AG04449 (cell line): ENCODE measurements at regions of chr21 and their contacts with region 1.

Region 1: DNA sequence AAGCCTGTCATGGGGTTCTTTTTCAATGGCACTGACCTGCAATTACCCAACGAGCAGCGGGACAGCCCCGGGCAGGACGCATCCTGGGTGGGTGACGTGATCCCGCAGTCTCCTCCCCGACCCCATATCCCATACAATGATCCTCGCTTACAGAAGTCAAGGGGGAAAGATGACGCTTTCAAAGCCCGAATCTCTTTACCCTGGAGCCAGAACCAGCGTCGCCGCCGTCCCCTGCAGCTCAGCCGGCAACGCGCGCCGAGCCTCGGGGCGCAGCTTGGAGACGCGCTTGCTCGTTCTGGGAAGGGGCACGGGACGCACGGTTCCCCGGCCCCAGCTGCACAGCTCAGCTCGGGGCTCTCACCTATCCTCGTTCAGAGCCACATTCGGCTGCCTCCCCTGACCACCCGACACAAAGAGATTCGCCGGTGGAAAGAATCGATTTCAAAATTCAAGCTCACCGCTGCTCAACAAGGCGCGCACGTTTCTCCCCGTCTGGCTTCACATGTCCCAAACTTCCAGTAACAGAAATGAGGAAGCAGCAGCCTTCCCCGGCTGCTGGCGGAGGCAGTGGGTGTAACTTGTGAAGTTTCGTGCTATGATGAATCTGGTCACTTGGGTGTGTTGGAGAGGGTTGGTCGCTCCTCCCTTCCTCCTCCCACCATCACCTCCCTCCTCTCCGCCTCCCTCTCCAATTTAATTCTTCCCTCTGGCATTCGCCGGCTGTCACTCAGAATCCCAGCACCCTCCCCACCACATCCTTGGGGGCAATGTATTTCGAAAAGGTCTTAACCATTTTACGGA is at the start of gene TIAM1:
- DNase-seq: peak; percentile 23
- H3K4me3 ChIP-seq: peak within 1 kb of the TSS; percentile 75
- CTCF ChIP-seq: no peak

Region 2: GRCh38 chr21:31198575-31198974 is 145.3 kb before region 1 on chr21:
- CTCF ChIA-PET with region 1: interaction called, 13 read pairs
- POLR2A ChIA-PET with region 1: no interaction called
- DNase-seq: peak; percentile 10
- H3K4me3 ChIP-seq: no peak overlapping the region
- CTCF ChIP-seq: peak; percentile 25

Region 3: GRCh38 chr21:31316488-31317169 is 27.3 kb before region 1 on chr21:
- CTCF ChIA-PET with region 1: interaction called, 13 read pairs
- POLR2A ChIA-PET with region 1: no interaction called
- DNase-seq: no peak
- H3K4me3 ChIP-seq: no peak overlapping the region
- CTCF ChIP-seq: no peak

Region 4: DNA sequence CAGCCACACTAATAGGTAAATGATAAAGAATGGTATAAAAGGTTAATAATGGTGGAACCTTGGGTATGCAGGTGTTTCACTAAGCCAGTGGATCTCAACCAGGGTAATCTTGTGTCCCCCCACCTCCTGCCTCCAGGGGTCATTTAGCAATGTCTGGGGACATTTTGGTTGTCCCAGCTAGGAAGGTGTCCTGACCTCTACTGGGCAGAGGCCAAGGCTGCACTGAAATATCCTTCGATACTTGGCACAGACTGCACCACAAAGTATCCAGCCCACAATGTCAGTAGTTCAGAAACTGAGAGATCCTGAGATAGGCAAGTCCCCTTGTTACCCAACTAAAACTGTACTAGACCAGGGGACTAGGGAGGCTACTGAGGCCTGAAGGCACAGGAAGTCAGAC is 113.8 kb after region 1 on chr21:
- CTCF ChIA-PET with region 1: no interaction called
- POLR2A ChIA-PET with region 1: no interaction called
- DNase-seq: no peak
- H3K4me3 ChIP-seq: no peak overlapping the region
- CTCF ChIP-seq: no peak